ENCODE measurements at regions of chr17 and their contacts with region 1.

Region 1: DNA sequence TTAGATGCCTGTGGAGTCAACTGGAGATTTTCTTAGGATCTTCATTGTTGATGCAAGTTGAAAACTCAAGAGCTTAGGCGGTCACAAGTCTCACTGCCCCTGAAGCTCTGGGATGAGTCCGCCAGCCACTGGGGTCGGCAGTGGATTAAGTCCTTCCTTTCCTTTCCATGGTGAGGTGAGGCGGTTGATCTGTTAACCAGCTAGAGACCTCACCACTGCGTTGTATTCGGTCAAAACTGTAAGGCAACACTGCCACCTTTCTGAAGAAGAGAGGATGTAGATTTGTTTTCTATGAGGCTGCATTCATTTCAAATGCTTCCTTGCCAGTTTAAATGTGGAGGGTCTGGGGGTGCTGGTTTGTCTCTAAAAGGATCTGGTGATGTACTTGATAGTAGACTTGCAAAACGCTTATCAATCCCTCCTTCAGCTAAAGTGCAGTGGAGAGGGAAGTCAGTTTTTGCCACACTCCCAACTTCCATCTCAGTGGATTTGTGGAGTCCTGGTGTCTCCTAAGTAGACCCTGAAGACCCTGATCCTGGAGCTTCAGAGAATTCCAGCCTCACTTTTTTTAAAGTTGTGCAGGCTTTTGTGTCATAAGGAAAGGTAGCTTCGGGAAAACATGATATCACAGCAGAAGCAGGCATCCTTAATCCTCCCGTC is 1.7 kb downstream of the MYOCD start:
- DNase-seq: no peak
- H3K4me3 ChIP-seq: no peak overlapping the region
- H3K27ac ChIP-seq: no peak overlapping the region
- H3K4me1 ChIP-seq: no peaks in the 10 kb centered on the region
- H3K27me3 ChIP-seq: peaks cover 0 to 36% of the 10 kb centered on the region in 2 donors
- CTCF ChIP-seq: peak in 1 of 3 donors; percentile 23
- POLR2A ChIP-seq: no peak

Region 2: DNA sequence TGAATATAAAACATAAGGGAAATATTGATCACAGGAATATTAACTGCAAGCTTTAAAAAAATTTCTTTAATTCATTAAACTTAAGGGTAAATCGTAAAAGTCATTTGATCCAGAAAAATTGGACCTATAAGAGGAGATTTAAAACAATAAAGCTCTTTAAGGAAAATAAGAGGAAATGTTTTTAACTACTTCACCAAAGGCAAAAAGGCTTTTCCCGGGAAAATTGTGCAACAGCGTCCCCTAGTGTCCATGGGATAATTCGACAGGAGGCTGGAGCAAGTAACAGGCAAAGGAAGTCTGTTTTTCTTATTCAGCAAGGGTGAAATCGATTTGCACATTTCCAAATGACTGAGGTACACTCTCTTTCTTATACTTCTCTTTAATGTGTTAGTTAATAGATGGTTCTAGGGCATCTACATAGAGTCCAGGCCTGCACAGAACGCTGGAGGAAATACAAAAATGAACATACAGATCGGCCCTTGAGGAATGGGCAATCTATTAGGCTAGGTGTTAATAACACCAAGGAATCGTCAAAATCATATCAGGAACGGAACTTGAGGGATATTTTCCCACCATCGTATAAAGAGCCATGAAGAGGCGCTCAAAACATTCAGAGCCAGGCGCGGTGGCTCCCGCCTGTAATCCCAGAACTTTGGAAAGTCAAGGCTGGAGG is 731.6 kb before region 1 on chr17:
- intact Hi-C with region 1: no loop called
- DNase-seq: no peak
- H3K4me3 ChIP-seq: no peak overlapping the region
- H3K27ac ChIP-seq: no peak overlapping the region
- H3K4me1 ChIP-seq: no peaks in the 10 kb centered on the region
- H3K27me3 ChIP-seq: no peaks in the 10 kb centered on the region
- CTCF ChIP-seq: peak in 1 of 3 donors; percentile 50
- POLR2A ChIP-seq: no peak

Region 3: DNA sequence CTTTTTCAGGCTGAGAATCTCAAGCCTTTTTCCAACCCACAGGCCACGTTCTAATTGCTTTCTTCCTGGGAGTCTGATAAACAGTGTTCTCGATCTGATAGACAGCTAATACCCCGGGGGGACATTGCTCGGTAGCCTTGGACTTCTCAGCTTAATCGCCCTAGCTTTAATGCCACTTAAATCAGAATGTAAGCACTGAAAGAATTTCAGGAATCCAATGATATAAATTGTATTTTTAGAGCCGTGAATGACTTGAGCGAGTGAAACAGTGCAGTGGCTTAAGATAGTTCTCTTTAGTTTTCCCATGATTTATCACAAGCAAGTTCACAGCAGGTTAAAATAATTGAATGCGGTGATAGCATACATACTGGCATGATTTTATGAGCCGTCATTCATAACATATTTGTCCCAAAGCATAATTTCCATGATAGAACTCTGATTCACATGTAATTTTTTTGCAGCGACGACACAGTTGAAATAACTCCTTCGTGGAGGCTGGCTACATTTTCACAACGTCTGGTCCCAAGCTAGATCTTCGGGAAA is 117.9 kb before region 1 on chr17:
- intact Hi-C with region 1: loop called (anchors 10 kb)
- DNase-seq: no peak
- H3K4me3 ChIP-seq: no peak overlapping the region
- H3K27ac ChIP-seq: no peak overlapping the region
- H3K4me1 ChIP-seq: no peaks in the 10 kb centered on the region
- H3K27me3 ChIP-seq: no peaks in the 10 kb centered on the region
- CTCF ChIP-seq: no peak
- POLR2A ChIP-seq: no peak

Region 4: DNA sequence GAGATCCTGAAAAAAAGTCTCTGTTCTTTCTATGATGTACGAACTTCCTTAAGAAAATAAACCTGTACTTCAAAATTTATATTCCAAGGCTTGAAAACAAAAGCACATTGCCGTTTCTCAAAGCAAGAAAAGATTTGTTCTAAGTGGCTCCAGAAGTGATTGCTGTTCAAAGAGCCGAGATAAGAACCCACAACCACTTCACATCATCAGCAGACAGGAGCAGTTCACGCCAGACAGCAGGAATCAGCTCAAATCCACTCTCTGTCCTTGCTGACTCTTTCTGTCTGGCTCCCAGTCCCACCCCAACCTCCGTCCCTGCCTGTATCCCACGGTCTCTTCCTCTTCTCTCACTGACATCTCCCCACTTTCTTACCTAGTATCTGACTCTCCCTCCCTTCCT is 86.8 kb before region 1 on chr17:
- intact Hi-C with region 1: no loop called
- DNase-seq: no peak
- H3K4me3 ChIP-seq: no peak overlapping the region
- H3K27ac ChIP-seq: no peak overlapping the region
- H3K4me1 ChIP-seq: no peaks in the 10 kb centered on the region
- H3K27me3 ChIP-seq: no peaks in the 10 kb centered on the region
- CTCF ChIP-seq: no peak
- POLR2A ChIP-seq: no peak